ENCODE measurements at regions of chr13 and their contacts with region 1.

Region 1: DNA sequence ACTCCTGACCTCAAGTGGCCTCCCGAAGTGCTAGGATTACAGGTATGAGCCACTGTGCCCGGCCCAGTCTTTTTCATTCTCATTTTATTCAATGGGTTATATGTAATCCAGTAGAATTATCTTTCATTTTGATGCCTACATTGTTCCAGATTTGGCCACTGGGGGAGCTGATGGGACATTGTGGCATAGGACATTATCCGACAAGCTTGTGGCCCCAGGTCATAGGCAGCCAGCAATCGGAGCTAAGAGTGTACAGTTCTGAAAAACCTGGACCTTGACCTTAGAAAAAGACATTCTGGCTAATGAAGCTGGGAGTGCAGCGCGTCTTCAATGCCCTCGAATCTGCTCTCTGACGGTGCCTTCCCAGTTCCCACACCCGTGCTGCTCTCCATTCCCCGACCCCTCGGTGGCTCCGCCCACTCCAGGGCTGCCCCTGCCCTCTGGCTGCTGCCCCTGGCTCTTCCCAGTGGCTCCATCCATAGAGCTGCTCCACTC is 108.7 kb downstream of the TEX29 start:
- DNase-seq: peak; percentile 47
- ATAC-seq: 0 out of 2 replicates have a peak, but pooled peaks have one; percentile 29
- H3K4me3 ChIP-seq: no peak overlapping the region
- H3K27ac ChIP-seq: no peak overlapping the region
- H3K4me1 ChIP-seq: no peaks in the 10 kb centered on the region
- H3K27me3 ChIP-seq: peaks cover 24% of the 10 kb centered on the region
- CTCF ChIP-seq: peak; percentile 53

Region 2: GRCh38 chr13:111184458-111185401 is 244.4 kb before region 1 on chr13:
- CTCF ChIA-PET with region 1: interaction called, 10 read pairs
- POLR2A ChIA-PET with region 1: no interaction called
- intact Hi-C with region 1: no loop called
- DNase-seq: no peak
- ATAC-seq: no peak
- H3K4me3 ChIP-seq: no peak overlapping the region
- H3K27ac ChIP-seq: no peak overlapping the region
- H3K4me1 ChIP-seq: peaks cover 11% of the 10 kb centered on the region; the same call in 1 of the 2 replicates
- H3K27me3 ChIP-seq: no peaks in the 10 kb centered on the region
- CTCF ChIP-seq: no peak

Region 3: GRCh38 chr13:111384441-111385182 is 44.5 kb before region 1 on chr13:
- CTCF ChIA-PET with region 1: no interaction called
- POLR2A ChIA-PET with region 1: no interaction called
- intact Hi-C with region 1: no loop called
- DNase-seq: no peak
- ATAC-seq: no peak
- H3K4me3 ChIP-seq: no peak overlapping the region
- H3K27ac ChIP-seq: no peak overlapping the region
- H3K4me1 ChIP-seq: no peaks in the 10 kb centered on the region
- H3K27me3 ChIP-seq: peaks cover 8% of the 10 kb centered on the region
- CTCF ChIP-seq: no peak